ENCODE measurements at regions of chr12 and their contacts with region 1.

Region 1: DNA sequence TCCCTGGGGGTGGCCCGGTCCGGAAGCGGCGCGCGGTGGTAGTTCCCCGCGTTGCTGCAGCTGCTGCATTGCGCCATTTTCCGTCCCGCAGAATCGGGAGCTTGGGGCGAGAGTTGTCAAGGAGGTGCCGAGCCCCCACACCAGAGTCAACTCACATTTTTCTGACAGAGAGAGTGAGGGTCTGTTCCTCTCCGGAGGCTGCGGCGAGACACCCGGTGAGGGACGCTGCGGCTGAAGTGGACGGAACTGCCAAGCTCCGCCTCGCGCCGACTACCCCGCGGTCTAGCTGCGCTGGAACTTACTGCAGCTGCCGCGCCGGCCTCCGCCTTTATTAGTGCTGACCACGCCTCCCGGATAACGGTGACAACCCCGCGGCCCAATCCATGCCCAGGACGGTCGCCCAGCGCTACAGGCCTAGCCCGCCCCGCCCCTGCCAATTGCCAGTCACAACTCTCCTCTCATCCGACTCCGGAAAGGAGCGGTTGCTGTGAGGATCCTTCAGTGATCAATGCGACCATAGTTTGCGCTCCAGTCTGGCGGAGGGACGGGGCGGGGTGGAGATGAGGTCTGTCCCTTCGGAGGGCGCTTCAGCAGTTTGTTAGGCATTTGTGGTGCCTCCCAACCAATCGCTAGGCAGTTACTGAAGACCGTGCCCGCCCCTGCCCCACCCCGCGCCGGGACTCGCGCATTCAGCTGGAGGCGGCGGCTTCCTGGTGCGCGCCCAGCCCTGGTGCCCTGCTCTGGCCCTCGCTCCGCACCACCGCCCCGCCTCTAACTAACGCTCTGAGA is at the start of gene VAMP1:
- DNase-seq: peak; percentile 99
- H3K4me3 Mint-ChIP-seq: peak within 1 kb of the TSS; percentile 89
- H3K27ac Mint-ChIP-seq: peak within 1 kb of the TSS; percentile 88
- H3K4me1 Mint-ChIP-seq: peaks cover 52% of the 10 kb centered on the region
- H3K27me3 Mint-ChIP-seq: peaks cover 8% of the 10 kb centered on the region
- total RNA-seq, gene VAMP1: 45.1 to 50.9 TPM

Region 2: DNA sequence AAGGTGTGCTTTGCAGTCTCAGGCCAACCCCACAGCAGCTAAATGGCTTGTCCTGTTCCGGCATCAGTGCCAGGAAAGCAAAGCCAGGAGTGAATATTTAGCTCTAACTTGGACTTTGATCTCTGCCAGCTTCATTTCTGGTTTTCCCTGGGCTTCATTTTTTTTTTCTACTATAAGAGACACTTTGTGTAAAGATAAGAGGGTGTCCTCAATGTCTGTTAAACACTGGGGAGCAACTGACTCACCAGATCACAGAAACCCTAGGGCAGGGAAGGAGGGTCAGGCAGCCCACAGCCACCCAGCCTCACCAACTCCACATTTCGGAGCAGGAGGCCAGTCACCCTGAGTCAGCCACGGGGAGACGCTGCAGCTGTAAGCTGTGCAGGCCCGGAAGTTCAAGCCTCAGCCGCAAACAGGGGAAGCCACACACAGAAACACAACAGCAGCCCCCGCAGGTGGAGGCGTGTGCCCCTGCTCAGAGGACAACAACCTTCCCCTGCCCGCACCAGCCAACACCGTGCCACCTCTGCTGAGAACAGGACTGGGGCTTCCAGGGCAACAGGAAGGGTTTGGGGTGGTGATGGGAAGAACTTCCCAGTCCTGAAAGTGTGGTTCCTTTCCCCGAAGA is 135.0 kb before region 1 on chr12:
- CTCF ChIA-PET with region 1: interaction called, 31 read pairs
- POLR2A ChIA-PET with region 1: interaction called, 16 read pairs
- DNase-seq: peak; percentile 90
- H3K4me3 Mint-ChIP-seq: no peak overlapping the region
- H3K27ac Mint-ChIP-seq: no peak overlapping the region
- H3K4me1 Mint-ChIP-seq: no peaks in the 10 kb centered on the region
- H3K27me3 Mint-ChIP-seq: no peaks in the 10 kb centered on the region

Region 3: GRCh38 chr12:6434205-6435140 is 36.1 kb before region 1 on chr12:
- CTCF ChIA-PET with region 1: interaction called, 13 read pairs
- POLR2A ChIA-PET with region 1: interaction called, 11 read pairs
- DNase-seq: peak; percentile 50
- H3K4me3 Mint-ChIP-seq: no peak overlapping the region
- H3K27ac Mint-ChIP-seq: peak overlapping the region; percentile 71
- H3K4me1 Mint-ChIP-seq: peaks cover 44% of the 10 kb centered on the region
- H3K27me3 Mint-ChIP-seq: no peaks in the 10 kb centered on the region

Region 4: GRCh38 chr12:6451348-6452244 is 19.0 kb before region 1 on chr12 and contains the start of gene TAPBPL:
- CTCF ChIA-PET with region 1: interaction called, 36 read pairs
- POLR2A ChIA-PET with region 1: interaction called, 298 read pairs
- DNase-seq: peak; percentile 83
- H3K4me3 Mint-ChIP-seq: peak within 1 kb of the TSS; percentile 99
- H3K27ac Mint-ChIP-seq: peak within 1 kb of the TSS; percentile 97
- H3K4me1 Mint-ChIP-seq: peaks cover 71% of the 10 kb centered on the region
- H3K27me3 Mint-ChIP-seq: no peaks in the 10 kb centered on the region
- total RNA-seq, gene TAPBPL: 45.0 to 49.0 TPM

Region 5: DNA sequence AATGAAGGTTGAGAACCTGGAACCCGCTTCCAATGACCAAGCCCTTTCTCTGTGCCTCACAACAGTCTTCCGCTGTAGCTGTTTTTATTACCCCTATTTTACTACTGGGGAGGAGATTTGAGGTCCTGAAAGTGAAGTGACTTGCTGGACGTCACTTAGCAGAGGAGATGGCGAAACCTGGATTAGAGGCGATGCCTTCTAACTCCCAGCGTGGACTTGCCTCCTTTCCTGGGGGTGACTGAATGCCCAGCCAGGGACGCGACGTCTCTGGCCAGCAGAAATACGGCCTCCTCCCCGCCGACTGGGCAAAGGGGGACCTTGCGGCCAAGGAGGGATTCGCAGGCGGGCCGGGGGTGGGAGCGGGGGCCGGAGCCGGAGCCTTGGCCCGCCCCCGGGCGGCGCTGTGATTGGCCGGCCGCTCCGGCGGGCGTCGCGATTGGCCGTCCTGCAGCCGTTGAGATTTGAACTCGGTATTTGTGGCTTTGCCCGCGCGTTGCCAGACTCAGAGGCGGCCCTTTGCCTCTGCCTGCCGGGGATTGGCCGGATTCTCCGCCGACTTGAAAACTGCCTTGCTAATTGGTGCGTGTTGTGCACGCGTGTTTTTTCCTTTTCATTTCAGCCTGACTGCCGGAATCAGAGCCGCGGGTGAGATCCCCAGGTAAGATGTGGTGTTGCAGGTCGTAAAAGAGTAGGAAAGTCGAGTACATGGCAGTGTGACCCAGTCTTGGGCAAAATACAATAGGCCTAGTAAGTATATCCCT is 23.1 kb after region 1 on chr12 and contains the start of gene NCAPD2:
- CTCF ChIA-PET with region 1: interaction called, 12 read pairs
- POLR2A ChIA-PET with region 1: interaction called, 163 read pairs
- DNase-seq: peak; percentile 98
- H3K4me3 Mint-ChIP-seq: peak within 1 kb of the TSS; percentile 96
- H3K27ac Mint-ChIP-seq: peak within 1 kb of the TSS; percentile 98
- H3K4me1 Mint-ChIP-seq: peaks cover 44% of the 10 kb centered on the region
- H3K27me3 Mint-ChIP-seq: no peaks in the 10 kb centered on the region
- total RNA-seq, gene NCAPD2: 153 to 156 TPM